ENCODE measurements at regions of chr4 and their contacts with region 1.

Region 1: DNA sequence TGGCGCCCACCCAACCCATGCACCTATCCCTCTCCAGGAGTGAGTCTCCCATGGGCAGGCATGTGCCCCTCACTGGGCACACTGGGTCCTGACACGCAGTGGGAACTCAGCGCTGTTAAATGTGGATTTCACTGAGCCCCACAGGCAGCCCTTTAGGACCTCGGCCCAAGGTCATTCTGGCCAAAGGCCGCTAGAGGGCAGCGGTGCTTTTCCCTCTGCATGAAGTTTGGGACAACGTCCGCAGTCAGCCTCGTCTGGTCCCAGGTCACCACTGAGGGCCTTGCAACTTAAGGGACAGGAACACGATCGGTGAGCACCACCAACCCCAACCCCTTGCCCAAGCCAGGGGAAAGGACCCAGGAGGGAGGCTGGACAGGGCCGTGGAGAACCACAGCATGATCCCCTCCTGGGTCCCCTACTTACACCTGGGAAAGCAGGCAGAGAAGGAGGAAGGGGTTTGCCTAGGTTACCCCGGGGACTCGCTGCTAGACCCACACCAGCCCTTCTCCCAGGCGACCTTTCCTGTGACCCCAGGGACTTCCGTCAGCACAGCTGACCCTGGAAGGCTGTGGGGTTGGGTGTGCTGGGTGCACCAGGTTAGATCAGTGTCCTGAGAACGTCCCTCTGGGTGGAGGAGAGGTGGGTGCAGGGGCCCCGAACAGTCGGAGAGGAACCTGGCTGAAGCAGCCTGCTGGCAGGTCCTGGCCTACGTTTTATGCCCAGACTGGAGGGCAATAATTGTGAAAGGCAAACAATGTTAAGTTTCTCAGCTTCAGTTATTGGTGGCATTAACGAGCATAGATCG is 24.0 kb downstream of the CYTL1 start:
- DNase-seq: peak; percentile 48 to 64 (median 59)
- H3K4me3 ChIP-seq: no peak overlapping the region
- H3K4me3 Mint-ChIP-seq: peak overlapping the region in 1 of 2 donors; percentile 75
- H3K27ac ChIP-seq: no peak overlapping the region
- H3K27ac Mint-ChIP-seq: no peak overlapping the region
- H3K4me1 ChIP-seq: peaks cover 4% of the 10 kb centered on the region in 2 donors
- H3K4me1 Mint-ChIP-seq: peaks cover 4% of the 10 kb centered on the region
- H3K27me3 ChIP-seq: no peaks in the 10 kb centered on the region
- H3K27me3 Mint-ChIP-seq: peaks cover 0 to 5% (median 2%) of the 10 kb centered on the region in 3 donors
- CTCF ChIP-seq: peak; percentile 96

Region 2: DNA sequence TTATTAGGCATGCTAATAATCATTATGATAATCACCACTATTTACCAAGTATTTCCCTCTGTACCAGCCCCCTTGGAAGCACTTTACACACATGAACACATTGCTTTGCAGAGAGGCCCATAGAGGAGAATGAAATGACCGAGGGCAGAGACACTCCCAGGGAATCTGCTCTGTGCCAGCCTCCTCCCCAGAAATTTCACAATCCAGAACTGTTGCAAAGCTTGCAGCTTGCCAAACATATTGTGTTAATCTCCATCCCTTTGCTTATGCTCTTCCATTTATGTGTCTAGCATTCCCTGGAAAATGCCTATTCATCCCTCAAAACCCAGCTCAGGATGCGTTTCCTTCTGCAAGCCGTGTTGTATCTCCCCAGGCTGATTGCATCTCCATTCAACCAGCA is 13.9 kb before region 1 on chr4:
- intact Hi-C with region 1: no loop called
- DNase-seq: no peak
- H3K4me3 ChIP-seq: no peak overlapping the region
- H3K4me3 Mint-ChIP-seq: no peak overlapping the region
- H3K27ac ChIP-seq: no peak overlapping the region
- H3K27ac Mint-ChIP-seq: no peak overlapping the region
- H3K4me1 ChIP-seq: no peaks in the 10 kb centered on the region
- H3K4me1 Mint-ChIP-seq: no peaks in the 10 kb centered on the region
- H3K27me3 ChIP-seq: no peaks in the 10 kb centered on the region
- H3K27me3 Mint-ChIP-seq: peaks cover 1 to 2% (median 2%) of the 10 kb centered on the region in 3 donors
- CTCF ChIP-seq: no peak

Region 3: DNA sequence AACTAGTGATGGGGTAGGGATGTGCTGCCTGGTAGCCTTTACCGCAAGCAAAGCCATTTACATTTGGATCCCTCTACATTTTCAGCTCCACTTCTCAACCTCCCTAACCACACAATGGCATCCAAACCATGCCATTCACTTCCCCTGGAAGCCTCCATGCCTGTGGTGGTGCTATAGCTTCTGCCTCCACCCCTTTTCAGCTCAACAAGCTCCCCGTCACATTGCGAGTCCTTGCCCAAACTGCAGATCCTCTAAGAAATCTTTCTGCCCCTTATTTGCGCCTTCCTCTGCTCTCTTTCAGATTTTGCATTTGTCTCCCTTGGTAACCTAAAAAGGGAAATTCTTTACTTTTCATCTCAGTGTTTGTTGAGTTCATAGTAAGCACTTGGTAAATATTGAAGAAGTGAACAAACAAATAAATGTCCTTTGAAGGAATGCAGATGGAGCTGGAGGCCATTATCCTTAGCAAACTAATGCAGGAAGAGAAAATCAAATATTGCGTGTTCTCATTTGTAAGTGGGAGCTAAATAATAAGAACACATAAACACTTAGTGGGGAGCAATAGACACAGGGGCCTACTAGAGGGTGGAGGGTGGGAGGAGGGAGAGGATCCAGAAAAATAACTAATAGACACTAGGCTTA is 17.1 kb after region 1 on chr4:
- intact Hi-C with region 1: no loop called
- DNase-seq: no peak
- H3K4me3 ChIP-seq: no peak overlapping the region
- H3K4me3 Mint-ChIP-seq: no peak overlapping the region
- H3K27ac ChIP-seq: no peak overlapping the region
- H3K27ac Mint-ChIP-seq: no peak overlapping the region
- H3K4me1 ChIP-seq: no peaks in the 10 kb centered on the region
- H3K4me1 Mint-ChIP-seq: peaks cover 1% of the 10 kb centered on the region
- H3K27me3 ChIP-seq: no peaks in the 10 kb centered on the region
- H3K27me3 Mint-ChIP-seq: peaks cover 0 to 2% (median 1%) of the 10 kb centered on the region in 3 donors
- CTCF ChIP-seq: no peak

Region 4: DNA sequence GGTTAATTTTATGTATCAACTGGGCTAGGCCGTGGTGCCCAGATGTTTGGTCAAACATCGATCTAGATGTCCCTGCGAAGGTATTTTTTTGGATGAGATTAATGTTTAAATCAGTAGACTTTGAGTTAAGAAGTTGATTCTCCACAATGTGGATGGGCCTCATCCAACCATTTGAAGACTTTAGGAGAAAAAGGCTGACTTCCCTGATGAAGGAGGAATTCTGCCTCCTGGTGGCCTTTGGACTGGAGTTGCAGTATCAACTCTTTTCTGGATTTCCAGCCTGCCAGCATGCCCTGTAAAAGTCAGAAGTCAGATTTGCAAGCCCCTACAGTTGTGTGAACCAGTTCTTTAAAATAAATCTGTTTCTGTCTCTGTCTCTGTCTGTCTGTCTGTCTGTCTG is 147.4 kb after region 1 on chr4:
- intact Hi-C with region 1: loop called (anchors 2 to 5 kb)
- DNase-seq: peak; percentile 14 to 40 (median 32)
- H3K4me3 ChIP-seq: no peak overlapping the region
- H3K4me3 Mint-ChIP-seq: no peak overlapping the region
- H3K27ac ChIP-seq: no peak overlapping the region
- H3K27ac Mint-ChIP-seq: no peak overlapping the region
- H3K4me1 ChIP-seq: no peaks in the 10 kb centered on the region
- H3K4me1 Mint-ChIP-seq: no peaks in the 10 kb centered on the region
- H3K27me3 ChIP-seq: no peaks in the 10 kb centered on the region
- H3K27me3 Mint-ChIP-seq: peaks cover 0 to 5% (median 3%) of the 10 kb centered on the region in 3 donors
- CTCF ChIP-seq: peak; percentile 65

Region 5: GRCh38 chr4:5249727-5250126 is 254.4 kb after region 1 on chr4:
- intact Hi-C with region 1: loop called in 1 of 2 experiments (anchors 10 kb)
- DNase-seq: no peak
- H3K4me3 ChIP-seq: no peak overlapping the region
- H3K4me3 Mint-ChIP-seq: no peak overlapping the region
- H3K27ac ChIP-seq: no peak overlapping the region
- H3K27ac Mint-ChIP-seq: no peak overlapping the region
- H3K4me1 ChIP-seq: no peaks in the 10 kb centered on the region
- H3K4me1 Mint-ChIP-seq: no peaks in the 10 kb centered on the region
- H3K27me3 ChIP-seq: no peaks in the 10 kb centered on the region
- H3K27me3 Mint-ChIP-seq: no peaks in the 10 kb centered on the region
- CTCF ChIP-seq: no peak

Region 6: DNA sequence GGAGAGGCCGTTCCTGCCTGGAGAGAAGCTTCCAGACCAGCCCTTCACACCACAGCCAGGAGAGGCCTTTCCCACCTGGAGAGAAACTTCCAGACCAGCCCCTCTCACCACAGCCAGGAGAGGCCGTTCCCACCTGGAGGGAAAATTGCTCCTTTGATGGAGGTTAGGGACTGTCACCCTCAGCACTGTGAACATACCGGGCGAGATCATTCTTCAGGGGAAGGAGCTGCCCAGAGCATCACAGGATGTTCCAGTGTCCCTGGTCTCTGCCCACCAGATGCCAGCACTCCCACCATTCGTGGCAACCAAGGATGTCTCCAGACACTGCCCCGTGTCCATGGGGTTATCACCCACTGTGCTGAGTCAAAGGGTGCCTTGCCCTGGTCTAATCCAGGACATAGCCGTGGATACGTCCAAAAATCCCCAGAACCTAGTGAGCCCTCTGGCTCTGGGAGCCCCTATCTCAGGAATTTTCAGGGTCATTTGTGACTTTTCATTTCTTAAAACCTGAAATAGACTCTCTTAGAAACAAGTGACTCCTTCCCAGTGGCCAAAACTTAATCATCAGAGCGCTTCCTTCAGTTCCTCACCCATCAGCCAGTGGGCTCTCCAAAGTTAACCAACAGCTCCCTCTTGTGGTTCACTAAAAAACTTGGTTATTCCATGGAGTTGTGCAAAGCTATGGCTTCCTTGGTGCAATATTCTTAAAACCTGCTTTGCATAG is 817.4 kb after region 1 on chr4:
- intact Hi-C with region 1: loop called (anchors 2 to 5 kb)
- DNase-seq: peak; percentile 18 to 53 (median 47)
- H3K4me3 ChIP-seq: no peak overlapping the region
- H3K4me3 Mint-ChIP-seq: no peak overlapping the region
- H3K27ac ChIP-seq: no peak overlapping the region
- H3K27ac Mint-ChIP-seq: peak overlapping the region in 1 of 7 donors; percentile 10
- H3K4me1 ChIP-seq: no peaks in the 10 kb centered on the region
- H3K4me1 Mint-ChIP-seq: no peaks in the 10 kb centered on the region
- H3K27me3 ChIP-seq: no peaks in the 10 kb centered on the region
- H3K27me3 Mint-ChIP-seq: peaks cover 0 to 2% (median 0%) of the 10 kb centered on the region in 3 donors
- CTCF ChIP-seq: peak; percentile 73